CD4-positive, alpha-beta memory T cell (primary cell): ENCODE measurements at regions of chr19 and their contacts with region 1.

Region 1: GRCh38 chr19:17747205-17748098 is 3.8 kb upstream of the FCHO1 start:
- DNase-seq: peak; percentile 94 to 96 (median 94)
- H3K4me3 ChIP-seq: peak overlapping the region in 1 of 2 donors; percentile 59
- H3K4me3 Mint-ChIP-seq: peak overlapping the region; percentile 73 to 96 (median 94)
- H3K27ac ChIP-seq: peak overlapping the region; percentile 52
- H3K27ac Mint-ChIP-seq: peak overlapping the region; percentile 31 to 90 (median 74)
- H3K4me1 ChIP-seq: peaks cover 44% of the 10 kb centered on the region
- H3K4me1 Mint-ChIP-seq: peaks cover 28 to 56% (median 41%) of the 10 kb centered on the region in 4 donors
- H3K27me3 ChIP-seq: no peaks in the 10 kb centered on the region
- H3K27me3 Mint-ChIP-seq: no peaks in the 10 kb centered on the region

Region 2: DNA sequence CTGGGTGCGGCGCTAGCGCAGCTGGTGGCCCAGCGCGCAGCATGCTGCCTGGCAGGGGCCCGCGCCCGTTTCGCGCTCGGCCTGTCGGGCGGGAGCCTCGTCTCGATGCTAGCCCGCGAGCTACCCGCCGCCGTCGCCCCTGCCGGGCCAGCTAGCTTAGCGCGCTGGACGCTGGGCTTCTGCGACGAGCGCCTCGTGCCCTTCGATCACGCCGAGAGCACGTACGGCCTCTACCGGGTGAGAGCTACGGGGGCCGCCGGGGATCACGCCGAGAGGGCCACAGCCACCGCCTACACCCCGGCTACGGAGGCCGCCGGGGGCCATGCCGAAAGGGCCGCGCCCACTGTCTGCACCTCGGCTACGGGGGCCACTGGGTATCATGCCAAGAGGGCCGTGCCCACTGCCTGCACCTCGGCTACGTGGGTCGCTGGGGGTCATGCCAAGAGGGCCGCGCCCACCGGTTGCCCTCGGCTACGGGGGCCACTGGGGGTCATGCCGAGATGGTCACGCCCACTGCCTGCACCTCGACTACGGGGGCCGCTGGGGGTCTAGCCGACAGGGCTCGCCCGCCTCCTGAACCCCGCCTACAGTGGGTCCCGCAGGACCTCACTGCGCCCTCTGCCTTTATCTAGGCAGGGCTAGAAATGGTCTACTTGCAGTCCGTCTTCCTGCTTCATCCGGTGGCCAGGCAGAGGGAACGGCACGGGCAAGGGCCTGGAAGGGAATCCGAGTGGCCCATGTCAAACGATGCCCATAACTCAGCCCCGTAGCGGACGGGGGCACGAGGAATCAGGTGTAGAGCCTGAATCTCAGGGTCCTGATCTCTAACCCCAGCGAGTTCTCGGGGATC is 235.5 kb before region 1 on chr19:
- CTCF ChIA-PET with region 1: no interaction called
- POLR2A ChIA-PET with region 1: no interaction called
- intact Hi-C with region 1: no loop called
- DNase-seq: peak; percentile 86 to 90 (median 88)
- H3K4me3 ChIP-seq: peak overlapping the region; percentile 50 to 96
- H3K4me3 Mint-ChIP-seq: peak overlapping the region; percentile 88 to 100 (median 98)
- H3K27ac ChIP-seq: peak overlapping the region; percentile 92
- H3K27ac Mint-ChIP-seq: peak overlapping the region; percentile 90 to 98 (median 95)
- H3K4me1 ChIP-seq: peaks cover 20% of the 10 kb centered on the region
- H3K4me1 Mint-ChIP-seq: peaks cover 17 to 47% (median 30%) of the 10 kb centered on the region in 4 donors
- H3K27me3 ChIP-seq: no peaks in the 10 kb centered on the region
- H3K27me3 Mint-ChIP-seq: no peaks in the 10 kb centered on the region

Region 3: GRCh38 chr19:17555480-17555928 is 191.9 kb before region 1 on chr19 and contains the start of gene COLGALT1:
- CTCF ChIA-PET with region 1: no interaction called
- POLR2A ChIA-PET with region 1: no interaction called
- intact Hi-C with region 1: loop called (anchors 10 kb)
- DNase-seq: peak; percentile 94 to 98 (median 95)
- H3K4me3 ChIP-seq: peak within 1 kb of the TSS; percentile 54 to 80
- H3K4me3 Mint-ChIP-seq: peak within 1 kb of the TSS; percentile 83 to 89 (median 86)
- H3K27ac ChIP-seq: peak within 1 kb of the TSS; percentile 62
- H3K27ac Mint-ChIP-seq: peak within 1 kb of the TSS in 6 of 7 donors; percentile 63 to 92 (median 76)
- H3K4me1 ChIP-seq: peaks cover 18% of the 10 kb centered on the region
- H3K4me1 Mint-ChIP-seq: peaks cover 8 to 25% (median 14%) of the 10 kb centered on the region in 4 donors
- H3K27me3 ChIP-seq: no peaks in the 10 kb centered on the region
- H3K27me3 Mint-ChIP-seq: no peaks in the 10 kb centered on the region
- total RNA-seq, gene COLGALT1: 68.3 to 74.7 TPM

Region 4: DNA sequence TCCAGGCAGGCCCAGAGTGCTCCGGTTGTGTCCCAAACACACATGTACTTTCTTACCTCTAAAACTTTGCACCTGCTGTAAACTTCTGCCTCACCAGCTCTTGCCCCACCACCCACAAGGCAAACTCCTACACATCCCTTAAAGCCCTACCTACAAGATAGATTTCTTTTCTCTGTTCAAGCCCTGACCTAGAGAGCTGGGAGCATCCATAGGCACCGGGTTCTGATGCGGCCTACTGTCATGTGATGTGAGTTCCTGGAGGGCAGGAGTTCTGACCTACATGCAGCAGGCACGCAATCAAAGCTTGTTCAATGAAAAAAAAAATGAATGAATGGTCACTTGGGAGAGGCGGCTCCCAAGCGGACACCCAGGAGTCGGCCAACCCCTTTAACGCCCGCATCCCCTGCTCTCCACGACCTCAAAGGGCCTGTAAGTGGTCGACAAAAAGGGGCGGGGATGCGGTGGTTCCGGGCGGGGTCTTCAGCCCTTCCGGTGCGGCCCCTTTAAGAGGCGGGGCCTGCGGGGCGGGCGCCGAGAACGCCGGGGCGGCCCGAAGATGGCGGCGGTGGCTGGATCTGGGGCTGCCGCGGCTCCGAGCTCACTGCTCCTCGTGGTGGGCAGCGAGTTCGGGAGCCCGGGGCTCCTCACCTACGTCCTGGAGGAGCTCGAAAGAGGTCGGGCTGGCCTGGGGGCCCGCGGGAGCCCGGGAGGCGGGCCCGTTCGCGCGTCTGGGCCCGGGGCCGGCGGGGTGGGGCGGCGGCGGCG is 28.3 kb before region 1 on chr19 and contains the start of gene MAP1S:
- CTCF ChIA-PET with region 1: interaction called, 3 read pairs
- POLR2A ChIA-PET with region 1: interaction called, 78 read pairs
- intact Hi-C with region 1: loop called (anchors 1 kb)
- DNase-seq: peak; percentile 42 to 59 (median 47)
- H3K4me3 ChIP-seq: peak within 1 kb of the TSS; percentile 51 to 88
- H3K4me3 Mint-ChIP-seq: peak within 1 kb of the TSS; percentile 88 to 93 (median 90)
- H3K27ac ChIP-seq: peak within 1 kb of the TSS; percentile 53
- H3K27ac Mint-ChIP-seq: peak within 1 kb of the TSS; percentile 82 to 94 (median 91)
- H3K4me1 ChIP-seq: peaks cover 32% of the 10 kb centered on the region
- H3K4me1 Mint-ChIP-seq: peaks cover 19 to 46% (median 36%) of the 10 kb centered on the region in 4 donors
- H3K27me3 ChIP-seq: no peaks in the 10 kb centered on the region
- H3K27me3 Mint-ChIP-seq: no peaks in the 10 kb centered on the region
- total RNA-seq, gene MAP1S: 59.1 to 64.9 TPM

Region 5: DNA sequence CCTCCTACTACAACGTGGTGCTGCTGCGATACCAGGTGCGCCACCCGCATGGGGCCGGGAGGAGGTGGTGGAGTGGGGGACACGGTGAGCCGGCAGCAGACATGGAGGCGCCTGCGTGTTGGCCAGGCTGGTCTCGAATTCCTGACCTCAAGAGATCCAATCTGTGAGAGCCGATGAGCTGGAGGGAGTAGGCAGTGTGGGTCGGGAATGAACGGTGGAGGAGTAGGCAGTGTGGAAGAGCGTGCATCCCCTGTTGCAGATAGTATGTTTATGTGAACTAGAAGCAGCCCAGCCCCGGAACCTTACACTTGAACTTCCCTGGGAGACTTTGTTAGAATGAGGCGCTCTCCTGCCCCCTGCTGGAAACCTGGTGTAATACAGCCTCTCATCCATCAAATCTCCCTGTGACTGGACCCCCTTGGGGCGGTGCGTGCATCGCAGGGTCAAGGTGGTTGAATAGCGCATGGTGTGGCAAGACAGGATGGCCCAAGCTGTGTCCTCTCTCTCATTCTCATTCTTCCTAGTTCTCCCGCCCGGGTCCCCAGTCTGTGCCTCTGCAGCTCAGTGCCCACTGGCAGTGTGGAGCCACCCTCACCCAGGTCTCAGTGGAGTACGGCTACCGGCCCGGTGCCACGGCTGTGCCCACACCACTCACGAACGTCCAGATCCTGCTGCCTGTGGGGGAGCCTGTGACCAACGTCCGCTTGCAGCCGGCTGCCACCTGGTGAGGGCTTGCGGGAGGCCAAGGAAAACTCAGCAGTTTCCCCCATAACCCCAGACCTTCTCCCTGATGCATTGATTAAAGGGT is 37.0 kb after region 1 on chr19:
- CTCF ChIA-PET with region 1: interaction called, 12 read pairs
- POLR2A ChIA-PET with region 1: interaction called, 4 read pairs
- intact Hi-C with region 1: no loop called
- DNase-seq: peak; percentile 68 to 72 (median 68)
- H3K4me3 ChIP-seq: no peak overlapping the region
- H3K4me3 Mint-ChIP-seq: peak overlapping the region in 2 of 8 donors; percentile 24 to 49
- H3K27ac ChIP-seq: no peak overlapping the region
- H3K27ac Mint-ChIP-seq: peak overlapping the region in 6 of 7 donors; percentile 0 to 86 (median 67)
- H3K4me1 ChIP-seq: peaks cover 6% of the 10 kb centered on the region
- H3K4me1 Mint-ChIP-seq: peaks cover 7 to 16% (median 15%) of the 10 kb centered on the region in 4 donors
- H3K27me3 ChIP-seq: no peaks in the 10 kb centered on the region
- H3K27me3 Mint-ChIP-seq: no peaks in the 10 kb centered on the region

Region 6: GRCh38 chr19:17847538-17848366 is 100.3 kb after region 1 on chr19 and contains the start of gene JAK3:
- CTCF ChIA-PET with region 1: interaction called, 3 read pairs
- POLR2A ChIA-PET with region 1: interaction called, 11 read pairs
- intact Hi-C with region 1: no loop called
- DNase-seq: peak; percentile 80 to 91 (median 84)
- H3K4me3 ChIP-seq: peak within 1 kb of the TSS; percentile 52 to 76
- H3K4me3 Mint-ChIP-seq: peak within 1 kb of the TSS; percentile 91 to 98 (median 94)
- H3K27ac ChIP-seq: peak within 1 kb of the TSS; percentile 91
- H3K27ac Mint-ChIP-seq: peak within 1 kb of the TSS; percentile 95 to 98 (median 97)
- H3K4me1 ChIP-seq: peaks cover 76% of the 10 kb centered on the region
- H3K4me1 Mint-ChIP-seq: peaks cover 39 to 80% (median 59%) of the 10 kb centered on the region in 4 donors
- H3K27me3 ChIP-seq: no peaks in the 10 kb centered on the region
- H3K27me3 Mint-ChIP-seq: no peaks in the 10 kb centered on the region
- total RNA-seq, gene JAK3: 132 to 135 TPM

Region 7: GRCh38 chr19:17951990-17952976 is 204.8 kb after region 1 on chr19:
- CTCF ChIA-PET with region 1: no interaction called
- POLR2A ChIA-PET with region 1: no interaction called
- intact Hi-C with region 1: no loop called
- DNase-seq: no peak
- H3K4me3 ChIP-seq: no peak overlapping the region
- H3K4me3 Mint-ChIP-seq: peak overlapping the region in 4 of 8 donors; percentile 17 to 71 (median 46)
- H3K27ac ChIP-seq: no peak overlapping the region
- H3K27ac Mint-ChIP-seq: peak overlapping the region in 1 of 7 donors; percentile 24
- H3K4me1 ChIP-seq: peaks cover 54% of the 10 kb centered on the region
- H3K4me1 Mint-ChIP-seq: peaks cover 20 to 48% (median 32%) of the 10 kb centered on the region in 4 donors
- H3K27me3 ChIP-seq: peaks cover 34% of the 10 kb centered on the region
- H3K27me3 Mint-ChIP-seq: peaks cover 33 to 44% of the 10 kb centered on the region in 2 donors